Heart left ventricle (tissue), 16 donors: ENCODE measurements at regions of chr3 and their contacts with region 1.

Region 1: GRCh38 chr3:61561374-61562041 is at the start of gene PTPRG:
- DNase-seq: peak; percentile 91 to 94 (median 92)
- ATAC-seq: peak; percentile 59 to 84 (median 78)
- H3K4me3 ChIP-seq: peak within 1 kb of the TSS; percentile 65 to 97 (median 88)
- H3K27ac ChIP-seq: peak within 1 kb of the TSS; percentile 91 to 98 (median 96)
- H3K4me1 ChIP-seq: peaks cover 0 to 40% (median 16%) of the 10 kb centered on the region in 12 donors
- H3K27me3 ChIP-seq: peaks cover 0 to 28% (median 0%) of the 10 kb centered on the region in 9 donors
- CTCF ChIP-seq: no peak
- POLR2A ChIP-seq: peak in 1 of 2 donors; percentile 77
- total RNA-seq, gene PTPRG: 23.5 to 48.5 (median 35.6) TPM

Region 2: DNA sequence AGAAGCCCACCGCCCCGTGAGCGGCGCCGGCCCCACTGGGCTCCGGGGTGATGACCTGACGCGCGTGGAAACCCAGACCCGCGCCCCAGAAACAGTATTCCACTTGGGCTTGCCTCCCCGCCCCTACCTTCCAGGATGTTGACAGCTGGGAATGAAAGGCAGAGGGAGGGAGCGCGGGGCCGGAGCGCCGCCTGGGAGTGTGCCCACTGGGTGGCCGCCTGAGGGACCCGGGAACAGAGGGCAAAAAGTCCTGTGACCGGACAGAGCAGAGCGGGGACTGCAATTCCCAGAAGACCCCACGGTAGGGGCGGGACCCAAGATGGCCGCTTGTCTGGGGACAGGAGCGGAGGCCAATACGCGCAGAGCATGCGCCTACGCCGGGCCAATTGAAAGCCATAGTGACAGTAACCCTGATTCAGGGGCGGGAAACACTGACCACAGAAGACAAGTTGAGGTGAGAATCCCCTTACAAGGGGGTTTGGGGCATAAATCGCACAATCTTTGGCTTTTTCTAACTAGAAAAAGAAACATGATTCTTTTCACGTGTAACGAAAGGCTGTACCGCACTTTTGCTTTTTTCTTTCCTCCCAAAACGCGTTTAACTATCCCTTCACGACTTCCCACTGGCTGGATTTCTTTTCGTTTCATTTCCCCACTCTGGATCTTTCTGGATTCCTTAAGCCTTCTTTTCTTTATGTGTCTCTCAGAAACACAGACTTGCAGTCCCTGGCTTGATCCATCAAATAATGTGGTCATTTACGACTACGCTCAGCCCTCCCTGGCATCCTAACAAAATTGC is 310.1 kb before region 1 on chr3 and contains the start of gene FHIT:
- intact Hi-C with region 1: loop called in 1 of 10 experiments (anchors 10 kb)
- DNase-seq: peak; percentile 96 to 97 (median 96)
- ATAC-seq: peak; percentile 99
- H3K4me3 ChIP-seq: peak within 1 kb of the TSS; percentile 47 to 84 (median 74)
- H3K27ac ChIP-seq: peak within 1 kb of the TSS; percentile 59 to 90 (median 84)
- H3K4me1 ChIP-seq: peaks cover 0 to 46% (median 10%) of the 10 kb centered on the region in 12 donors
- H3K27me3 ChIP-seq: no peaks in the 10 kb centered on the region
- CTCF ChIP-seq: peak in 1 of 12 donors; percentile 23
- POLR2A ChIP-seq: peak in 1 of 2 donors; percentile 54
- total RNA-seq, gene FHIT: 12.1 to 26.8 (median 18.5) TPM

Region 3: GRCh38 chr3:61725851-61726333 is 164.4 kb after region 1 on chr3:
- intact Hi-C with region 1: loop called in 3 of 10 experiments (anchors 10 kb)
- DNase-seq: peak in 2 of 5 donors; percentile 34 to 37
- ATAC-seq: peak; percentile 79 to 90 (median 85)
- H3K4me3 ChIP-seq: no peak overlapping the region
- H3K27ac ChIP-seq: peak overlapping the region in 11 of 12 donors; percentile 16 to 73 (median 60)
- H3K4me1 ChIP-seq: peaks cover 0 to 59% (median 20%) of the 10 kb centered on the region in 12 donors
- H3K27me3 ChIP-seq: no peaks in the 10 kb centered on the region
- CTCF ChIP-seq: no peak
- POLR2A ChIP-seq: no peak

Region 4: GRCh38 chr3:61807865-61808276 is 246.4 kb after region 1 on chr3:
- intact Hi-C with region 1: loop called in 4 of 10 experiments (anchors 2 to 5 kb)
- DNase-seq: peak in 1 of 5 donors; percentile 45
- ATAC-seq: peak; percentile 43 to 83 (median 60)
- H3K4me3 ChIP-seq: peak overlapping the region in 1 of 12 donors; percentile 2
- H3K27ac ChIP-seq: peak overlapping the region; percentile 58 to 83 (median 75)
- H3K4me1 ChIP-seq: peaks cover 11 to 100% (median 84%) of the 10 kb centered on the region in 12 donors
- H3K27me3 ChIP-seq: no peaks in the 10 kb centered on the region
- CTCF ChIP-seq: no peak
- POLR2A ChIP-seq: no peak

Region 5: GRCh38 chr3:61927332-61927731 is 365.8 kb after region 1 on chr3:
- intact Hi-C with region 1: loop called in 7 of 10 experiments (anchors 5 to 10 kb)
- DNase-seq: peak; percentile 77 to 90 (median 86)
- ATAC-seq: peak; percentile 90 to 93 (median 92)
- H3K4me3 ChIP-seq: peak overlapping the region in 3 of 12 donors; percentile 6 to 30 (median 13)
- H3K27ac ChIP-seq: peak overlapping the region; percentile 29 to 91 (median 76)
- H3K4me1 ChIP-seq: peaks cover 9 to 73% (median 50%) of the 10 kb centered on the region in 12 donors
- H3K27me3 ChIP-seq: no peaks in the 10 kb centered on the region
- CTCF ChIP-seq: no peak
- POLR2A ChIP-seq: no peak

Region 6: DNA sequence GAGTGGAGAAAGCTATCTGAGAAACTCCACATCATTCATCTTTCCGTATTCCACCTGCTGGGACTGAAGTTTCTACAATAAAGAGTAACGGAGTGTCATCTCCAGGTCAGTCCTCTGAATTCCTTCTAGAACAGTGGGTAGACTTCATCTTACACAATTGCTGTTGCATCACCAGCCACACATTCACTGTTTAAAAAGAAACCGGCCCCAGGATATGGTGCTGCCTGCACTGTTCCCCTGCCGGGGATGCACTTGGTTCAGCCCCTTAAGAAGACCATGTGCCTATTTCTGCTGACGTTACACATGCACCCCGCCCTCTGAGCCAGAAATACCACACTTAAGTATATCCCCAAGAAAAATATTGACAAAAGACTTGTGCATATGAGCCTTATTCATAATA is 578.4 kb after region 1 on chr3:
- intact Hi-C with region 1: loop called in 2 of 10 experiments (anchors 5 to 10 kb)
- DNase-seq: no peak
- ATAC-seq: no peak
- H3K4me3 ChIP-seq: no peak overlapping the region
- H3K27ac ChIP-seq: no peak overlapping the region
- H3K4me1 ChIP-seq: peaks cover 0 to 25% (median 6%) of the 10 kb centered on the region in 12 donors
- H3K27me3 ChIP-seq: no peaks in the 10 kb centered on the region
- CTCF ChIP-seq: no peak
- POLR2A ChIP-seq: no peak